Activated CD4-positive, alpha-beta T cell treated with anti-CD3 and anti-CD28 coated beads, Interleukin-2, amount 10 ng/mL, durations not matched to agents 7 days and 5 days (primary cell): ENCODE measurements at regions of chr17 and their contacts with region 1.

Region 1: DNA sequence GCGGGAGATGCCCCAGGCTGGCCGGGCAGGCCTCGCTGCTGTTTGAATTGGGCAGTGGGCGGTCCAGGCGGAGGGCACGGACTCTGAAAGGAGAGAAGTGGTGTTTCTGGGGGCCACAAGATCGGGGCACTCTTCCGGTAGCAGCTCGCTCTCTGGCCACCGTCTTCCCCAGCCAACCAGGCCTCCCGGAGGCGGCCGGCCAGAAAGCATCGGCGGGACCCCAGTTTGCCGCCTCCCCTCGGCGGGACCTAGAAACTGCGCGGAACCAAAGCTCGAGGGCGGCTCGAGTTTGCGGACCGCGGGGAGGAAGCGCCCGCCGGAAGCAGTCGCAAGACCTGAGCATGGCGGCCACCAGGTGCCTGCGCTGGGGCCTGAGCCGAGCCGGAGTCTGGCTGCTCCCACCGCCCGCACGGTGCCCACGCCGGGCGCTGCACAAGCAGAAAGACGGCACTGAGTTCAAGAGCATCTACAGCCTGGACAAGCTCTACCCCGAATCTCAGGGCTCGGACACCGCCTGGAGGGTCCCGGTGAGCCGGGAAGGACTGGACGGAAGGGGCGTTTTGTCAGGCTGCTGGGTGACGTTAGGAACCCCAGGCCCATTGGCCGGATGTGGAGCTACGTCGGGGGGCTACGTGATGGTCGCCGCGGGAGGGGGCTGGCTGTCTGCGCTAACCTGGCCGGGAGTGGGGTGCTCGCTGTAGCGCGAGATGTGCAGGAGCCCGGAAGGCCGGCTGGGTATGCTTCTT is at the start of gene MRPL58:
- DNase-seq: peak; percentile 83
- H3K4me3 Mint-ChIP-seq: peak within 1 kb of the TSS; percentile 97
- H3K27ac Mint-ChIP-seq: peak within 1 kb of the TSS; percentile 95
- H3K4me1 Mint-ChIP-seq: peaks cover 32% of the 10 kb centered on the region
- H3K27me3 Mint-ChIP-seq: no peaks in the 10 kb centered on the region
- total RNA-seq, gene MRPL58: 41.2 to 46.2 TPM

Region 2: GRCh38 chr17:74987418-74987908 is 25.1 kb before region 1 on chr17 and contains the start of gene CDR2L:
- CTCF ChIA-PET with region 1: interaction called, 27 read pairs
- POLR2A ChIA-PET with region 1: interaction called, 5 read pairs
- DNase-seq: peak; percentile 92
- H3K4me3 Mint-ChIP-seq: peak within 1 kb of the TSS; percentile 83
- H3K27ac Mint-ChIP-seq: peak within 1 kb of the TSS; percentile 54
- H3K4me1 Mint-ChIP-seq: peaks cover 22% of the 10 kb centered on the region
- H3K27me3 Mint-ChIP-seq: peaks cover 46% of the 10 kb centered on the region
- total RNA-seq, gene CDR2L: 0.31 to 0.40 TPM

Region 3: GRCh38 chr17:74994476-74994875 is 18.0 kb before region 1 on chr17:
- CTCF ChIA-PET with region 1: interaction called, 27 read pairs
- POLR2A ChIA-PET with region 1: no interaction called
- DNase-seq: no peak
- H3K4me3 Mint-ChIP-seq: no peak overlapping the region
- H3K27ac Mint-ChIP-seq: no peak overlapping the region
- H3K4me1 Mint-ChIP-seq: peaks cover 16% of the 10 kb centered on the region
- H3K27me3 Mint-ChIP-seq: peaks cover 11% of the 10 kb centered on the region

Region 4: GRCh38 chr17:75024686-75025397 is 12.3 kb after region 1 on chr17:
- CTCF ChIA-PET with region 1: interaction called, 17 read pairs
- POLR2A ChIA-PET with region 1: no interaction called
- DNase-seq: peak; percentile 53
- H3K4me3 Mint-ChIP-seq: peak overlapping the region; percentile 33
- H3K27ac Mint-ChIP-seq: peak overlapping the region; percentile 31
- H3K4me1 Mint-ChIP-seq: peaks cover 30% of the 10 kb centered on the region
- H3K27me3 Mint-ChIP-seq: peaks cover 9% of the 10 kb centered on the region

Region 5: DNA sequence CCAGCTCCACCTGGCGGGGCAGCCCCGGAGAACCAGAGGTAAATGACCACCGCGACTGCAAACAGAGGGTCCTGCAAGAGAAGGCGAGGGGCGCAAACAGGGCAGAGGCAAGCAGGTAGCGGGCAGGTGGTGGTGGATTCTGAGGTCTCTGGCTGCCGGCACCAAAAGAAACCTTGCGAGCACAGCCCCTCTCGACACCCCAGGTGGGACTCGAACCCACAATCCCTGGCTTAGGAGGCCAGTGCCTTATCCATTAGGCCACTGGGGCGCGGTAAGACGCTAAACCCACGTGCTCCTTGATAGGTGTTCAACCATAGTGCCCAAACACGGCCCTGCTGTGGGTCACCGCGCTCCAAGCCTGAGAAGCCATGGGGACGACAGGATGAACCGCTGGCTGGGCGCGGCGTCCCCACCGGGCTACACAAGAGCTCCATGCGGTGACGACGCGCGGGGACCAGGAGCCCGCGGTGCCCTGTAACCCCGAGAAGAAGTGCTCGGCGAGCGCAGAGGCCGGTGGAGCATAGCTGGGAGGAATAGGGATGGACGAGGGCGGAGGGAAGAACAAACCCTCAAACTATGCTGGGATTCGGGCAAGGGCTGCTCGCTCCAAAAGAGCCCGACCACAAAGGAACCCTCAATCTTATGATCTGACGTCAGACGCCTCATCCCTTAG is 21.9 kb after region 1 on chr17:
- CTCF ChIA-PET with region 1: interaction called, 12 read pairs
- POLR2A ChIA-PET with region 1: no interaction called
- DNase-seq: peak; percentile 79
- H3K4me3 Mint-ChIP-seq: peak overlapping the region; percentile 83
- H3K27ac Mint-ChIP-seq: peak overlapping the region; percentile 99
- H3K4me1 Mint-ChIP-seq: peaks cover 55% of the 10 kb centered on the region
- H3K27me3 Mint-ChIP-seq: peaks cover 15% of the 10 kb centered on the region

Region 6: GRCh38 chr17:75124041-75124818 is 111.7 kb after region 1 on chr17:
- CTCF ChIA-PET with region 1: no interaction called
- POLR2A ChIA-PET with region 1: no interaction called
- DNase-seq: peak; percentile 59
- H3K4me3 Mint-ChIP-seq: peak overlapping the region; percentile 47
- H3K27ac Mint-ChIP-seq: peak overlapping the region; percentile 89
- H3K4me1 Mint-ChIP-seq: peaks cover 43% of the 10 kb centered on the region
- H3K27me3 Mint-ChIP-seq: no peaks in the 10 kb centered on the region